SK-N-SH (cell line): ENCODE measurements at regions of chr20 and their contacts with region 1.

Region 1: GRCh38 chr20:33862709-33863403 is 51.7 kb downstream of the CHMP4B start:
- DNase-seq: peak; percentile 90
- H3K4me3 ChIP-seq: no peak overlapping the region
- H3K27ac ChIP-seq: peak overlapping the region in 1 of 2 experiments; percentile 95; a peak in 2 of 4 replicates
- H3K4me1 ChIP-seq: peaks cover 0 to 60% of the 10 kb centered on the region in 2 experiments; a peak in 2 of 4 replicates
- H3K27me3 ChIP-seq: 0 out of 2 replicates have a peak, but pooled peaks cover 4% of the 10 kb centered on the region
- CTCF ChIP-seq: peak; percentile 70
- EP300 ChIP-seq: no peak
- RAD21 ChIP-seq: peak; percentile 76

Region 2: GRCh38 chr20:33624399-33624798 is 238.5 kb before region 1 on chr20:
- CTCF ChIA-PET with region 1: no interaction called
- POLR2A ChIA-PET with region 1: no interaction called
- DNase-seq: no peak
- H3K4me3 ChIP-seq: no peak overlapping the region
- H3K27ac ChIP-seq: no peak overlapping the region; a peak in 1 of 4 replicates
- H3K4me1 ChIP-seq: no peaks in the 10 kb centered on the region
- H3K27me3 ChIP-seq: no peaks in the 10 kb centered on the region
- CTCF ChIP-seq: no peak
- EP300 ChIP-seq: no peak
- RAD21 ChIP-seq: no peak

Region 3: DNA sequence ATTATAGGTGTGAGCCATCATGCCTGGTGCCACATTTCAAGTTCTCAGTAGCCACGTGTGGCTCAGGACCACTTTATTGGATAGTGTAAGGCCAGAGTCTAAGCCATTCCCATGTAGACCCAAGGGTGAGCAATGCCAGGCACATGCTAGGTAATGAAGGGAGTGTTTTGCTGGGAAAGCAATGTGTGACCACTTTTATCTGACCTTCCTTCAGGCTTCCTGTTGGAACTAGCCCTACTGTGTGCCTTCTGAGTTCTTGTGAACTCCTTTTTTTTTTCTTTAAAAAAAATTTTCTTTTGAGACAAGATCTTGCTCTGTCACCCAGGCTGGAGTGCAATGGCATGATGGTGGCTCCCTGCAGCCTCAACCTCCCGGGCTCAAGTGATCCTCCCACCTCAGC is 97.8 kb before region 1 on chr20:
- CTCF ChIA-PET with region 1: no interaction called
- POLR2A ChIA-PET with region 1: no interaction called
- DNase-seq: no peak
- H3K4me3 ChIP-seq: no peak overlapping the region
- H3K27ac ChIP-seq: no peak overlapping the region
- H3K4me1 ChIP-seq: no peaks in the 10 kb centered on the region
- H3K27me3 ChIP-seq: no peaks in the 10 kb centered on the region
- CTCF ChIP-seq: no peak
- EP300 ChIP-seq: no peak
- RAD21 ChIP-seq: no peak

Region 4: DNA sequence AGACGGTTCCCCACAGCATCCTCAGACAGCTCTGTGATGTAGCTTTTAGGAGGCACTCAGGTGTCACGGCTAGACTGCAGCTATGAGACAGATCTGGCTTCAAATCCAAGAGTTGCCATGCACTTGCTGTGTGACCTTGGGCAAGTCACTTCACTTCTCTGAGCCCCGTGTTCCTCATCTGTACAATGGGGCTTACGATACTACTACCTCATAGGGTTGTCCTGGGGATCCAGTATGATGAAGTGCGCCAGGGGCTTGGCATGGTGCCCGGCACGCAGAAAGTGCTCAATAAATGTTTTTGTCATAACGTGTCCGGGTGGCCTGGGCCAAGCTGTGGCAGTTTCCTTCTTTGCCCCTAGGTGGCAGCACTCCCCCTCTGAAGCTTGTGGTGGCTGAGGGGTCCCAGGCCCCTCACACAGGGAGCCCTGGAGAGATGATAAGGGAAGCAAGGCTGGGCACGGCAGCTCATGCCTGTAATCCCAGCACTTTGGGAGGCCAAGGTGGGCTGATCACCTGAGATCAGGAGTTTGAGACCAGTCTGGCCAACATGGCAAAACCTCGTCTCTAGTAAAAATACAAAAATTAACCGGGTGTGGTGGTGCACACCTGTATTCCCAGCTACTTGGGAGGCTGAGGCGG is 70.8 kb before region 1 on chr20:
- CTCF ChIA-PET with region 1: interaction called, 13 read pairs
- POLR2A ChIA-PET with region 1: no interaction called
- DNase-seq: peak; percentile 87
- H3K4me3 ChIP-seq: peak overlapping the region in 1 of 2 experiments; percentile 39; a peak in 1 of 4 replicates
- H3K27ac ChIP-seq: no peak overlapping the region
- H3K4me1 ChIP-seq: peaks cover 7 to 30% of the 10 kb centered on the region in 2 experiments; a peak in 2 of 4 replicates
- H3K27me3 ChIP-seq: no peaks in the 10 kb centered on the region
- CTCF ChIP-seq: peak; percentile 90
- EP300 ChIP-seq: no peak
- RAD21 ChIP-seq: peak; percentile 76

Region 5: DNA sequence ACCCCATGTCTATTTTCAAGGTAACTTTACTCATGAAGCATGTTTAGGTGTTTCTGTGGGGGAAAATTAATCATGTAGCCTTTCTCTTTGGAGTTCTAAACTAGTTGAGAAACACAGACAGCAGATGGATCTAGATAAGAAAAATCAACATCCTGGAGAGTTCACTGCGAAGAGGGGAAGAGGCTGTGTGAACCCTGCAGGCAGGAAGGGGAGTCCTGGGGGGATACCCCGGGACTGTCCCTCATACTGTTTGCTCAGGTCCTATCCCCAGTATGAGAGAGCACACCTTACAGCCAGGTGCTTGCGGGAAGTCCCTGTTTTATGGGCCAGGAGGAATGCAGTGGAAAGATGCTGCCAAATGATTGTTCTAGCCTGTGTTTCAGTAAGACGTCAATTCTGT is 19.0 kb before region 1 on chr20:
- CTCF ChIA-PET with region 1: interaction called, 13 read pairs
- POLR2A ChIA-PET with region 1: no interaction called
- DNase-seq: peak; percentile 66
- H3K4me3 ChIP-seq: no peak overlapping the region
- H3K27ac ChIP-seq: peak overlapping the region; percentile 38 to 93; a peak in 3 of 4 replicates
- H3K4me1 ChIP-seq: peaks cover 22 to 62% of the 10 kb centered on the region in 2 experiments
- H3K27me3 ChIP-seq: no peaks in the 10 kb centered on the region
- CTCF ChIP-seq: no peak
- EP300 ChIP-seq: peak in 1 of 2 experiments; percentile 33; a peak in 1 of 4 replicates
- RAD21 ChIP-seq: no peak

Region 6: DNA sequence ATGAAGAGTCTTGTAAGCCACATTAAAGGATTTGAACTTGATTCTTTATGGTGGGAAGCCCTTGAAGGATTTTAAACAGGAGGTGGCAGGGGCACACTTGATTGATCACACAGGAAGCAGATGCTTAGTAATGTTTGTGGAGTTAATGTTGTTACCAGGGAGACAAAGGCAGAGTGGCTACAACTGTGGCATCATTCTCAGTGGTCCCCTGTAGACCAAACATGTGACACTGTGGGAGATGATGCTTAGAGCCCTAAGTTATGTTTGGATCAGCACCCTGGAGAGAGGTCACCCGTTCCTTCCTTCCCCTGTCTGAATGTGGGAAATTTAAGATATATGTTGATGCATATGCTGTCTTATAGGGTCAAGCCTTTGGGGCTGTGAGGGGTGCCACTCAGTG is 196.0 kb after region 1 on chr20:
- CTCF ChIA-PET with region 1: interaction called, 17 read pairs
- POLR2A ChIA-PET with region 1: interaction called, 3 read pairs
- DNase-seq: no peak
- H3K4me3 ChIP-seq: no peak overlapping the region
- H3K27ac ChIP-seq: peak overlapping the region in 1 of 2 experiments; percentile 86; a peak in 1 of 4 replicates
- H3K4me1 ChIP-seq: peaks cover 0 to 49% of the 10 kb centered on the region in 2 experiments; a peak in 2 of 4 replicates
- H3K27me3 ChIP-seq: no peaks in the 10 kb centered on the region
- CTCF ChIP-seq: no peak
- EP300 ChIP-seq: no peak
- RAD21 ChIP-seq: no peak

Region 7: DNA sequence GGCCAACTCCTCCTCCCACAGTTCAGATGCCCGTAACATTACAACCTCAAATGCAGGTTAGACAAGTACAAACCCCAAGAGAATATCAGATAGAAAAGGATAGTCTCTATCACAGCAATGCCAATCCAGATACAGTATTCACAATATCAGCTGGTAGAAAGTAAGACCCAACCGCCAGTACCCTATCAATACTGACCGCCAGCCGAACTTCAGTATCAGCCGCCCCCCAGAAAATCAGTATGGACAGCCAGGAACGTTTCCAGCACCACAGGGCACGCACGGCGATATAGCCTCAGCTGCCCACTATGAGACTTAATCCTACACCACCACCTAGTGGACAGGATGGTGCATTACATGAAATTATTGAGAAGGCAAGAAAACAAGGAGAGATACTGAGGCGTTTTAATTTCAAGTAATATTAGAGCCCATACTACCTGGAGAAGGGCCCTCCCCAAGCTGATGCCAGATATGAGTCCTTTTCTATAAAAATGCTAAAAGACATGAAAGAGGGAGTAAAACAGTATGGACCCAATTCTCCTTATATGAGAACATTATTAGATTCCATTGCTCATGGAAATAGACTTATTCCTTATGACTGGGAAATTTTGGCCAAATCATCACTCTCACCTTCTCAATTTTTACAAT is 266.8 kb after region 1 on chr20:
- CTCF ChIA-PET with region 1: interaction called, 25 read pairs
- POLR2A ChIA-PET with region 1: no interaction called
- DNase-seq: peak; percentile 85
- H3K4me3 ChIP-seq: peak overlapping the region in 1 of 2 experiments; percentile 16; a peak in 1 of 4 replicates
- H3K27ac ChIP-seq: no peak overlapping the region
- H3K4me1 ChIP-seq: peaks cover 3 to 4% of the 10 kb centered on the region in 2 experiments; a peak in 3 of 4 replicates
- H3K27me3 ChIP-seq: no peaks in the 10 kb centered on the region
- CTCF ChIP-seq: peak; percentile 77
- EP300 ChIP-seq: no peak
- RAD21 ChIP-seq: peak; percentile 98

Region 8: GRCh38 chr20:34415079-34415478 is 552.2 kb after region 1 on chr20:
- CTCF ChIA-PET with region 1: no interaction called
- POLR2A ChIA-PET with region 1: no interaction called
- DNase-seq: no peak
- H3K4me3 ChIP-seq: no peak overlapping the region
- H3K27ac ChIP-seq: no peak overlapping the region
- H3K4me1 ChIP-seq: peaks cover 0 to 10% of the 10 kb centered on the region in 2 experiments; a peak in 1 of 4 replicates
- H3K27me3 ChIP-seq: no peaks in the 10 kb centered on the region
- CTCF ChIP-seq: no peak
- EP300 ChIP-seq: no peak
- RAD21 ChIP-seq: no peak

Region 9: DNA sequence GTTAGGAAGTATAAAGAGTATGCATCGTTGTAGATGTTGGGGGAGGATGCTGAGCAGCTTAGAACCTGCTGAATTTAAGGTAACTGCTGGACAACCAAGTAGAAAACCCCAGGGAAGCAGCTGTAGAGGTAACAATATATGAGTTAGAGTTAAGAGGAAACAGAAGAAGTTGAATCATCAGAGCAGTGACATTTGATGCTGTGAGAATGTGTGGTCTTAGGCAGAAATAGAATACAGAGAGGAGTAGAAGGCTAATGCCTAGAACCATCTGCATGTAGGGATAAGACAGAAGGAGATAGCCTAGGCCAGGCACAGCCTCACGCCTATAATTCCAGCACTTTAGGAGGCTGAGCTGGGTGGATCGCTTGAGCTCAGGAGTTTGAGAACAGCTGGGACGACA is 630.8 kb after region 1 on chr20:
- CTCF ChIA-PET with region 1: no interaction called
- POLR2A ChIA-PET with region 1: no interaction called
- DNase-seq: no peak
- H3K4me3 ChIP-seq: no peak overlapping the region
- H3K27ac ChIP-seq: no peak overlapping the region
- H3K4me1 ChIP-seq: no peaks in the 10 kb centered on the region
- H3K27me3 ChIP-seq: no peaks in the 10 kb centered on the region
- CTCF ChIP-seq: no peak
- EP300 ChIP-seq: no peak
- RAD21 ChIP-seq: no peak